A549 (cell line): ENCODE measurements at regions of chr10 and their contacts with region 1.

Region 1: GRCh38 chr10:5873515-5873995 is 16.1 kb downstream of the ANKRD16 start:
- DNase-seq: peak; percentile 71 to 82
- ATAC-seq: peak; percentile 86 to 92
- H3K4me3 ChIP-seq: no peak overlapping the region
- H3K27ac ChIP-seq: no peak overlapping the region
- H3K4me1 ChIP-seq: no peaks in the 10 kb centered on the region
- CTCF ChIP-seq: peak; percentile 81
- EP300 ChIP-seq: no peak
- POLR2A ChIP-seq: no peak
- RAD21 ChIP-seq: peak; percentile 57 to 65

Region 2: GRCh38 chr10:5813287-5814109 is 60.1 kb before region 1 on chr10 and contains the start of gene GDI2:
- CTCF ChIA-PET with region 1: interaction called, 9 read pairs
- POLR2A ChIA-PET with region 1: interaction called, 18 read pairs
- DNase-seq: peak; percentile 95 to 97
- ATAC-seq: peak; percentile 94 to 95
- H3K4me3 ChIP-seq: peak within 1 kb of the TSS; percentile 97
- H3K27ac ChIP-seq: peak within 1 kb of the TSS; percentile 97 to 99
- H3K4me1 ChIP-seq: peaks cover 33% of the 10 kb centered on the region
- CTCF ChIP-seq: no peak
- EP300 ChIP-seq: no peak
- POLR2A ChIP-seq: peak; percentile 83
- RAD21 ChIP-seq: no peak
- polyA plus RNA-seq, gene GDI2: 229 and 278 TPM in 2 replicates

Region 3: GRCh38 chr10:5860066-5860465 is 13.5 kb before region 1 on chr10:
- CTCF ChIA-PET with region 1: interaction called, 20 read pairs
- POLR2A ChIA-PET with region 1: interaction called, 4 read pairs
- DNase-seq: no peak
- ATAC-seq: no peak
- H3K4me3 ChIP-seq: no peak overlapping the region
- H3K27ac ChIP-seq: no peak overlapping the region
- H3K4me1 ChIP-seq: peaks cover 19% of the 10 kb centered on the region
- CTCF ChIP-seq: no peak
- EP300 ChIP-seq: no peak
- POLR2A ChIP-seq: no peak
- RAD21 ChIP-seq: no peak

Region 4: GRCh38 chr10:5889624-5890451 is 16.3 kb after region 1 on chr10 and contains the starts of genes ANKRD16 and FBH1:
- CTCF ChIA-PET with region 1: interaction called, 16 read pairs
- POLR2A ChIA-PET with region 1: interaction called, 5 read pairs
- DNase-seq: peak; percentile 89 to 99
- ATAC-seq: peak; percentile 88 to 97
- H3K4me3 ChIP-seq: peak within 1 kb of the TSS; percentile 81
- H3K27ac ChIP-seq: peak within 1 kb of the TSS; percentile 89 to 97
- H3K4me1 ChIP-seq: peaks cover 23% of the 10 kb centered on the region
- CTCF ChIP-seq: no peak
- EP300 ChIP-seq: no peak
- POLR2A ChIP-seq: peak; percentile 99
- RAD21 ChIP-seq: no peak
- polyA plus RNA-seq, gene ANKRD16: 8.9 and 13.1 TPM in 2 replicates
- polyA plus RNA-seq, gene FBH1: 56.5 and 69.8 TPM in 2 replicates

Region 5: GRCh38 chr10:6607182-6607581 is 733.6 kb after region 1 on chr10:
- CTCF ChIA-PET with region 1: no interaction called
- POLR2A ChIA-PET with region 1: no interaction called
- DNase-seq: no peak
- ATAC-seq: no peak
- H3K4me3 ChIP-seq: no peak overlapping the region
- H3K27ac ChIP-seq: no peak overlapping the region
- H3K4me1 ChIP-seq: no peaks in the 10 kb centered on the region
- CTCF ChIP-seq: no peak
- EP300 ChIP-seq: no peak
- POLR2A ChIP-seq: no peak
- RAD21 ChIP-seq: no peak